AG04449 (cell line): ENCODE measurements at regions of chr19 and their contacts with region 1.

Region 1: DNA sequence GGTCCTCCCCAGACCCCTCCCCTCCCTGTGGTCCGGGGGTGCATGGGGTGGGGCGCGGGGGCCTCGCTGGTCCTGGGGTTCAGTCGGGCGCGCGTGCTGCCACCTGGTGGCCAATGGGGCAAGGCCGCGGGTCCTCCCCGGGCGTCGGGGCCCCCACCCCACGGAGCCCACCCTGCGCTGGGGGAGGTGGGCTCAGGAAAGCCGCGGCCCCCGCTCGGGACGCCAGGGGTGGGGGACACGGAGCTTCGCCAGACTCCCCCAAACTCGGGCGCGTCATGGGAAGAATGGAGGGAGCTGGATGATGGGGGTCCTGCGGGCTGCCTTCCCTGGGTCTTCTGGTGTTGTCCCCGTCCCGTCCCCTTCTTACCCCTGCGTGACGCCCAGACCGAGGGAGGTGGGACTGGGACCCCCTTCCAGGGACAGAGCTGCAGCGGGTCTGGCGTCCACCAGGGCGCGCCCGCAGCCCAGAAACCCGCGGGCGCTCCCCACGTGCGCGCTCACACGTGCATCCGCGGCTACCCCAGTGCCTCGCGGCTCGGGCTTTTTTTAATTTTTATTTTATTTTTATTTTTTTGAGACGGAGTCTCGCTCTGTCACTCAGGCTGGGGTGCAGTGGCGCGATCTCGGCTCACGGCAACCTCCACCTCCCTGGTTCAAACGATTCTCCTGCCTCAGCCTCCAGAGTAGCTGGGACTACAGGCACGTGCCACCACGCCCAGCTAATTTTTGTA is 19.8 kb upstream of the TCF3 start:
- DNase-seq: no peak
- H3K4me3 ChIP-seq: peak overlapping the region; percentile 42
- CTCF ChIP-seq: peak; percentile 88

Region 2: DNA sequence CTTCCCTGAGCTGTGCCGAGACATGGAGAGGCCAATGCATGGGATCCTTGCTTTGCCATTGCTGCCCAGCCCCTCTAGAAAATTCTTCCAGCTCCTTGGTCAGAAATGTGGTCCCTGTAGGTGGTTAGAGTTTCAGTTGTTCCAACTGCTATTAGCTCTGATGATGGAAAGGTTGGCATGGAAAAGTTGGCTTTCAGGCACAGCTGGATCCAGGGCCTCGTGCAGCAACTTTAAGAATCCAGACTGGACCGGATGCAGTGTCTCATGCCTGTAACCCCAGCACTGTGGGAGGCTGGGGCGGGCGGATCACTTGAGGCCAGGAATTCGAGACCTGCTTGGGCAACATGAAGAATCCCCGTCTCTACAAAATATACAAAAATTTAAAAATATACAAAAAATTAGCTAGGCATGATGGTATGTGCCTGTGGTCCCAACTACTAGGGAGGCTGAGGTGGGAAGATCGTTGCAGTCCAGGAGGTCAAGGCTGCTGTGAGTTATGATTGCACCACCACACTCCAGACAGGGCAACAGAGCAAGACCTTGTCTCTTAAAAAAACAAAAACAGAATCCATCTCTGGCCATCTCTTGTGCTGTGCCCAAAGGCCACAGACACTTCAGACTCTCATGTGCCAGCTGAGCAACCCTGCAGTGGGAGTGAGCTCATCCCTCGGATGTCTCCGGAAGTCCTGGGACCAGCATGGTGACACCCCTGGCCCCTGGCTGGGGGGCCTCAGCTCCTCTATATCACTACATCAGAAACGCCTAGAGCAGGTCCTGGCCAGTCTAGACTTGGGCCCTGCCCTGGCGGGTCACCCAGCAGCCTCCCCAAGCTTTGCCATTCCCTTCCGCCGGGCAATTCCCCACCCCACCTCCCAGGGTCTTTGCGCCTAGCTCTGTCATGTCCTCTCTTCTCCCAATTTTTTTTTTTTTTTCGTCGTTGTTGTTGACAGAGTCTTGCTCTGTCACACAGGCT is 120.8 kb before region 1 on chr19:
- CTCF ChIA-PET with region 1: interaction called, 59 read pairs
- POLR2A ChIA-PET with region 1: no interaction called
- DNase-seq: no peak
- H3K4me3 ChIP-seq: no peak overlapping the region
- CTCF ChIP-seq: no peak

Region 3: GRCh38 chr19:1655131-1655981 is 16.8 kb before region 1 on chr19:
- CTCF ChIA-PET with region 1: interaction called, 61 read pairs
- POLR2A ChIA-PET with region 1: no interaction called
- DNase-seq: no peak
- H3K4me3 ChIP-seq: no peak overlapping the region
- CTCF ChIP-seq: no peak

Region 4: GRCh38 chr19:1760020-1760419 is 87.8 kb after region 1 on chr19:
- CTCF ChIA-PET with region 1: interaction called, 105 read pairs
- POLR2A ChIA-PET with region 1: no interaction called
- DNase-seq: no peak
- H3K4me3 ChIP-seq: no peak overlapping the region
- CTCF ChIP-seq: no peak

Region 5: DNA sequence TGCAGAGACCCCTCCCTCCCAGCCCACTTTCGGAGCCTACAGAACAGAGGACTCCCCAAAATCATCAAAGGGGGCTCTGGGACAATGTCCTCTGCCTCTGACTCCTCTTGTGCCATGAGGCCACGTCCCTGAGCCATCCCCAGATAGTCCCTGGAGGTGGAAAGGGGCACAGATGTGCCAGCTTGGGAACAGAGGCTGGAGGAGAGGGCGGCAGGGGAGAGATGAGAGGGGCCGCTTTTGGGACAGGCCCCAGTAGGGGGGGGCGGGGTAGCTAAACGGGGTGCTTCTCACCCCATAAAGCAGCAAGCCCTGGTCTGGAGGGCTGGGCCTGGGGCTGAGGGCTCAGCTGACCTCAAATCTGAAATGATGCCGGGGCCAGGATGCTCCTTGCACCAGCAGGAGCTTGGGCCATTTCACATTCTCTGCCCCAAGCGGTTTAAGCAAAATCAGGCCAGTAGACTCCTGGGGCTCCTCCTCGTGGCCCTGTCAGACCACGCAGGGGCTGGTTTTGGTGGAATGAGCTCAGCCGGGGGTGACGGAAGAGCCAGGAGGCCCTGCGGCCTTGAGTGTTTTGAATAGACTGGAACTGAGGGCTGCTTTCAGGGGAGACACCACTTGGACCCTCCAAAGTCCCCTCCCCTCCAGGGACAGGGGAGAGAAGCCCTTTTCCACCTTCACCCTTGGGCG is 108.2 kb after region 1 on chr19:
- CTCF ChIA-PET with region 1: interaction called, 16 read pairs
- POLR2A ChIA-PET with region 1: no interaction called
- DNase-seq: no peak
- H3K4me3 ChIP-seq: no peak overlapping the region
- CTCF ChIP-seq: peak; percentile 19

Region 6: DNA sequence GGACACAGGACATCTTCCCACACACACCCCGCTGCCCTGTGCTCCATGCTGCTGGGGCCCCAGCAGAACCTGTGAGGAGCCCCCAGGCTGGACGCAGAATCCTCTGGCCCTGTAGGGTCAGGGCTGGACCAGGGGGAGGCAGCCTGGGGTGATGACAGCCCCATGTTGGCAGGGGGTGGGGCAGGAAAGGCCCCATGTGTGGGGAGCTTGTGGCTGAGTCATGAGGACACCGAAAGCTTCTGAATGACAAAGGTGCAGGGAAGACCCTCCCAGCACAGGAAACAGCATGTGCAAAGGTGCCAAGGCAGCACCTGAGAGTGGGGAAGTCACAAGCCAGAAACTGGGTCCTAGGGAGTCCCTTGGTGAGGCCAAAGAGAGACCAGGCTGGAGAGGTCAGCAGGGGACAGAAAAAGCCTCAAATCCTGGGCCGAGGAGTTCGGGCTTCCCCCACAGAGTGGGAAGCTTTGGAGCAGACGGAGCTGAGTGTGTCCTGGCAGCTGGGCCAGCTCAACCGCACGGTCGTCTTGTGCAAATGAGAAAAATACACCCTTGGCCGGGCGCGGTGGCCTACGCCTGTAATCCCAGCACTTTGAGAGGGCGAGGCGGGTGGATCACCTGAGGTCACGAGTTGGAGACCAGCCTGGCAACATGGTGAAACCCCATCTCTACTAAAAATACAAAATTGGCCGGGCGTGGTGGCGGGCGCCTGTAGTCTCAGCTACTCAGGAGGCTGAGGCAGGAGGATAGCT is 122.4 kb after region 1 on chr19:
- CTCF ChIA-PET with region 1: interaction called, 143 read pairs
- POLR2A ChIA-PET with region 1: no interaction called
- DNase-seq: no peak
- H3K4me3 ChIP-seq: no peak overlapping the region
- CTCF ChIP-seq: no peak

Region 7: DNA sequence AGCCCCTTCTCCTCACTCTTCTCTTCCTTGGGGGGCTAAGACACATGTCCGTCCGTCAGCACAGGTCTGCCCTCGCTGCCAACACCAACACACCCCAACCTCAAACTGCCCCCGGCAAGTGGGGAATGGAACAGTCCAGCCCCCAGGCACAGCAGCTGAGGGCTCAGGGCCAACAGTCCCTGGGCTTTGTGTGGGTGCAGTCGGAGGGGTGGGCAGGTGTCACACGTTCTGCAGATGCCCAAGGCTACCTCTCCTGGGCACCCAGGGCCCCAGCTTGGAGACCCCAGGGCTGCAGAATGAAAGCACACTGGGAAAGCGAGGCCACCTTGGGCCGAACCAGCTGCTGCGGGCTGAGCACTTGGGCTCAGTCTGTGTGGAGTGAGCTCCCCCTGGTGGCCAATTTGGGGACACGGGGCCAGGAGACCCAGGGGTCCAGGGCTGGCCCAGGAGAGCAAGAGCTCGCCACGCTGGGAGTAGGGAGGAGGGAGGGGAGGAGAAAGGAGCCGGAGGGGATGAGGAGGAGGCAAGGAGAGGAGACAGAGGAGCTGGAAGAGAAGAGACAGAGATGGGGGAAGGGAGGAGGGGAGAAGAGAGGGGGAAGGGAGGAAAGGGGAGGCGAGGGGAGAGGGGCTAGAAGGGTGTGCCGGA is 153.8 kb after region 1 on chr19:
- CTCF ChIA-PET with region 1: interaction called, 57 read pairs
- POLR2A ChIA-PET with region 1: no interaction called
- DNase-seq: no peak
- H3K4me3 ChIP-seq: no peak overlapping the region
- CTCF ChIP-seq: peak; percentile 96